GM12878 (cell line): ENCODE measurements at regions of chr11 and their contacts with region 1.

Region 1: GRCh38 chr11:100681064-100681502 is 6.0 kb upstream of the ARHGAP42 start:
- DNase-seq: peak; percentile 95
- ATAC-seq: peak; percentile 97
- H3K4me3 ChIP-seq: no peak overlapping the region; the same call in 1 of the 2 replicates
- H3K27ac ChIP-seq: peak overlapping the region; percentile 51
- H3K4me1 ChIP-seq: peaks cover 41% of the 10 kb centered on the region
- H3K27me3 ChIP-seq: no peaks in the 10 kb centered on the region
- CTCF ChIP-seq: no peak
- EP300 ChIP-seq: peak; percentile 95 to 98
- POLR2A ChIP-seq: no peak
- RAD21 ChIP-seq: no peak

Region 2: DNA sequence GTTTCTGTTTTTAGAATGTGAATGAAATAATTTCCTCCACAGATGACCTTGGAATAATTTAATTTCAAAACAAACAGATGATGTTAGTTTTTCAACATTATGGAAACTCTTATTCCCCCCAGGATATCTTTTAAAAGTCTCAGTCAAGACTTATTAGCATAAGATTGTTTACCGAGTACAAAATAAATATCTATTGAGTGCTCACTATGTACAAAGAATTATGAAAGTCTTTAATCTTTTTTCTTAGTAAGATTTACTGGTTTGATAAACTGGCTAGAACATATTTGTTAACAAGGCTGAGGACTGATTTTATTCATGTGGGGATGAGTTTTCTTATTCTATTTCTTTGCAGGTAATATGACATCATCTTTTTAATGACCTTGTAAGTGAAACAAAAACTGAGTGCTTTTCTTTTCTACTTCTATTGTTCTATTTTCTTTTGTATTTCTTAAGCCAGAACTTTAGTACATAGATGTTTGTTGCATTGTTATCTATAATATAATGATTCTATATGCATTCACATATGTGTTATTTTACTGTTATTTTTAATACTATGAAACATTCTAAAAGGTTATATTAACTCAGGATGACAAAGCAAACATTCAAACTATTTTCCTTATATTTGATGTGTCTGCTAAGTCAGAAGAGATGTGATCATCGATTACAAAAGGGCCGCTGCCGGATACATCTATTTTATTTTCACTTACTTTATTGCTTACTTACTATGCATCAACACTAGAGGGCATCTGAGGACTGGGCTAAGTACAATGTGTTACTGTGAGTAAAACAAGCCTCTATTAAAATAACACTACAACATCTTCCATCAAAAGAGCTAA is 105.0 kb before region 1 on chr11:
- CTCF ChIA-PET with region 1: interaction called, 18 read pairs
- POLR2A ChIA-PET with region 1: no interaction called
- RAD21 ChIA-PET with region 1: interaction called, 9 read pairs
- SMC1A ChIA-PET with region 1: interaction called, 5 read pairs
- in situ Hi-C with region 1: loop called (anchors 5 kb)
- intact Hi-C with region 1: loop called (anchors 2 kb)
- DNase-seq: peak; percentile 9
- ATAC-seq: peak; percentile 95
- H3K4me3 ChIP-seq: no peak overlapping the region
- H3K27ac ChIP-seq: no peak overlapping the region
- H3K4me1 ChIP-seq: no peaks in the 10 kb centered on the region
- H3K27me3 ChIP-seq: no peaks in the 10 kb centered on the region
- CTCF ChIP-seq: peak; percentile 59 to 76 (median 71)
- EP300 ChIP-seq: no peak
- POLR2A ChIP-seq: no peak
- RAD21 ChIP-seq: peak; percentile 97

Region 3: DNA sequence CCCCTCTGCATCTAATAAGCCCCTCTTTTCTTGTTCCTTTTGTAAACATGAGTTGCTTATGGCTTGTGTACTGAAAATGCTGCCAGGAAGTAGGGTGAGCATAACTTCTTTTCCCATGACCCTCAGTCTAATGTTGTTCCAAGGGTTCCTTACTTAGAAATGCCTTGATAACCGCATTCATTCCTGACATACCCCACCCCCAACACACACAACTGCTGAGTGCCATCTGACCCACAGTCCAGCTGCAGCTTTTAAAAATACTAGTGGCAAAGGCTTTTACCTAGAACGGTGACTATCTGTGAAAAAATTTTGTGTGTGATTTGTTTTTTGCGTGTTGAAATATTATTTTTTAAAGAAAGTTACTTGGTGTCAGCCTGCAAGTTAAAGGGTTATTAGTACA is 58.6 kb after region 1 on chr11:
- CTCF ChIA-PET with region 1: interaction called, 5 read pairs
- POLR2A ChIA-PET with region 1: no interaction called
- RAD21 ChIA-PET with region 1: interaction called, 6 read pairs
- SMC1A ChIA-PET with region 1: interaction called, 6 read pairs
- in situ Hi-C with region 1: no loop called
- intact Hi-C with region 1: loop called (anchors 2 kb)
- DNase-seq: no peak
- ATAC-seq: no peak
- H3K4me3 ChIP-seq: no peak overlapping the region
- H3K27ac ChIP-seq: no peak overlapping the region
- H3K4me1 ChIP-seq: peaks cover 22% of the 10 kb centered on the region
- H3K27me3 ChIP-seq: no peaks in the 10 kb centered on the region
- CTCF ChIP-seq: no peak
- EP300 ChIP-seq: no peak
- POLR2A ChIP-seq: no peak
- RAD21 ChIP-seq: no peak

Region 4: DNA sequence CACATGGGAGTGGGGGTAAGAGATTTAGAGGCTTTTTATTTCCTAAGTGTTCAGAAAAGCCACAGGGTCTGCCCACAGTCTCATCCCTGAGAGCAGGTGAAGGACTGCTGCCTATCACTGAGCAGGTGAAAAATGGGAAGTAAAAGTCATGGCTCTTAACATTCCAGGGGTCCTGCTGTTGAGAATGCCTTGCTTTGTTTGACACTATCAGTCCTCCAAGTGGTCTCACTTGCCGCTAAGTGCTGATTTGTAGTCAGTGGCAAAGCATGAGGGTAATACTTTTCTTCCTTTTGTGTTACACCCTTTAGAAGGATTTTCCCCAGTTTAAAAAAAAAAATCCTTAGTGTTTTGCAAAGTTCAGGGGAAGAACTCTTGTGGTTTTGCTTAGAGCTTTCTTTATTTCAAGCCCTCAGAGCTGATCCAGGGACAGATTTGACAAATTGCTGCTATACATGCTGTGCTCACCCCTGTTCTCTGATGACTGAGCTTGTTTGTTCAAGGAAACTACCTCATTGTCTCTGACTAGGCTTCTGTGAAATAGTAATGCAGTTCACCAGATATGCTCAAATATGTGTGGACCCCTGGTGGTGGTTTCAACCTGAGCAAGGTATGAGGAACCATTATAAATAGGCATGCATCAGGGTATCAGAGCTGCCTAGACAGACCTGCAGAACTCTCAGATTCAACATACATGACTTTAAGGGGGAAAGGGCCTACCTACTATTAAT is 147.0 kb after region 1 on chr11:
- CTCF ChIA-PET with region 1: interaction called, 10 read pairs
- POLR2A ChIA-PET with region 1: interaction called, 3 read pairs
- RAD21 ChIA-PET with region 1: interaction called, 9 read pairs
- SMC1A ChIA-PET with region 1: interaction called, 5 read pairs
- in situ Hi-C with region 1: no loop called
- intact Hi-C with region 1: loop called (anchors 1 kb)
- DNase-seq: peak; percentile 32
- ATAC-seq: peak; percentile 95
- H3K4me3 ChIP-seq: no peak overlapping the region
- H3K27ac ChIP-seq: no peak overlapping the region
- H3K4me1 ChIP-seq: no peaks in the 10 kb centered on the region
- H3K27me3 ChIP-seq: no peaks in the 10 kb centered on the region
- CTCF ChIP-seq: peak; percentile 36 to 43 (median 38); a peak in 4 of 6 replicates
- EP300 ChIP-seq: no peak
- POLR2A ChIP-seq: no peak
- RAD21 ChIP-seq: peak; percentile 50; the same call in 1 of the 2 replicates

Region 5: GRCh38 chr11:100930185-100930778 is 249.2 kb after region 1 on chr11:
- CTCF ChIA-PET with region 1: interaction called, 30 read pairs
- POLR2A ChIA-PET with region 1: no interaction called
- RAD21 ChIA-PET with region 1: interaction called, 4 read pairs
- SMC1A ChIA-PET with region 1: interaction called, 15 read pairs
- in situ Hi-C with region 1: loop called (anchors 10 kb)
- intact Hi-C with region 1: loop called (anchors 2 kb)
- DNase-seq: no peak
- ATAC-seq: peak; percentile 55
- H3K4me3 ChIP-seq: no peak overlapping the region
- H3K27ac ChIP-seq: no peak overlapping the region
- H3K4me1 ChIP-seq: peaks cover 14% of the 10 kb centered on the region
- H3K27me3 ChIP-seq: no peaks in the 10 kb centered on the region
- CTCF ChIP-seq: peak; percentile 39 to 59 (median 55); a peak in 5 of 6 replicates
- EP300 ChIP-seq: no peak
- POLR2A ChIP-seq: no peak
- RAD21 ChIP-seq: peak; percentile 75